Heart left ventricle (tissue), 16 donors: ENCODE measurements at regions of chr11 and their contacts with region 1.

Region 1: GRCh38 chr11:101323997-101324396 is 194.4 kb upstream of the PGR start:
- DNase-seq: peak in 3 of 5 donors; percentile 19 to 27 (median 26)
- ATAC-seq: peak in 1 of 4 donors; percentile 36
- H3K4me3 ChIP-seq: no peak overlapping the region
- H3K27ac ChIP-seq: no peak overlapping the region
- H3K4me1 ChIP-seq: no peaks in the 10 kb centered on the region
- H3K27me3 ChIP-seq: no peaks in the 10 kb centered on the region
- CTCF ChIP-seq: peak in 10 of 12 donors; percentile 1 to 50 (median 30)
- POLR2A ChIP-seq: no peak

Region 2: DNA sequence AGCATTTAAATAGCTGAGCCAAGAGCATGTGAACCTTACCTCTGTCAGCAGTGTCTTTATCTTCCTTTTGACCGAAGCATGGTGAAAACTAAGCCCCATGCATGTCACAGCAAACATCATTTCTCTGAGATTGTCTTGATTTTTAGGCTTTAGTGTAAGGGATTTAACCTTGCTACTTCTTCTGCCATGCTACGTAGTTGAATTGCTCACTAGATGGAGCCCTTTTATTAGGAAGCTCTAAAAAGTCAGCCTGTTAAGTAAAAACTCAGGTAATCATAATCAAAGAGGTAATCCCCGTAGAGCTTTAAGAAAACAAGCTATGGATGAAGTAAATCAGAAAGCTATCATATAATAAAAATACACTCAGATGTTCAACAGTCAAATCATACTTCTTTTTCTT is 343.8 kb before region 1 on chr11:
- intact Hi-C with region 1: loop called in 8 of 10 experiments (anchors 5 to 10 kb)
- DNase-seq: no peak
- ATAC-seq: no peak
- H3K4me3 ChIP-seq: no peak overlapping the region
- H3K27ac ChIP-seq: no peak overlapping the region
- H3K4me1 ChIP-seq: no peaks in the 10 kb centered on the region
- H3K27me3 ChIP-seq: no peaks in the 10 kb centered on the region
- CTCF ChIP-seq: peak in 11 of 12 donors; percentile 18 to 67 (median 49)
- POLR2A ChIP-seq: no peak

Region 3: GRCh38 chr11:100991541-100991940 is 332.5 kb before region 1 on chr11:
- intact Hi-C with region 1: loop called in 6 of 10 experiments (anchors 5 to 10 kb)
- DNase-seq: no peak
- ATAC-seq: no peak
- H3K4me3 ChIP-seq: no peak overlapping the region
- H3K27ac ChIP-seq: no peak overlapping the region
- H3K4me1 ChIP-seq: peaks cover 0 to 10% (median 2%) of the 10 kb centered on the region in 12 donors
- H3K27me3 ChIP-seq: no peaks in the 10 kb centered on the region
- CTCF ChIP-seq: no peak
- POLR2A ChIP-seq: no peak

Region 4: GRCh38 chr11:101369835-101370234 is 45.8 kb after region 1 on chr11:
- intact Hi-C with region 1: loop called in 1 of 10 experiments (anchors 10 kb)
- DNase-seq: no peak
- ATAC-seq: no peak
- H3K4me3 ChIP-seq: no peak overlapping the region
- H3K27ac ChIP-seq: no peak overlapping the region
- H3K4me1 ChIP-seq: no peaks in the 10 kb centered on the region
- H3K27me3 ChIP-seq: no peaks in the 10 kb centered on the region
- CTCF ChIP-seq: no peak
- POLR2A ChIP-seq: no peak

Region 5: GRCh38 chr11:101470881-101471520 is 147.0 kb after region 1 on chr11:
- intact Hi-C with region 1: no loop called
- DNase-seq: no peak
- ATAC-seq: no peak
- H3K4me3 ChIP-seq: no peak overlapping the region
- H3K27ac ChIP-seq: no peak overlapping the region
- H3K4me1 ChIP-seq: no peaks in the 10 kb centered on the region
- H3K27me3 ChIP-seq: no peaks in the 10 kb centered on the region
- CTCF ChIP-seq: no peak
- POLR2A ChIP-seq: no peak